Activated CD4-positive, alpha-beta T cell treated with anti-CD3 and anti-CD28 coated beads for 36 hours (primary cell): ENCODE measurements at regions of chr1 and their contacts with region 1.

Region 1: GRCh38 chr1:54944610-54945544 is 35.6 kb upstream of the TMEM61 start:
- DNase-seq: peak; percentile 81
- ATAC-seq: peak; percentile 90
- H3K4me3 Mint-ChIP-seq: no peak overlapping the region
- H3K27ac Mint-ChIP-seq: no peak overlapping the region
- H3K4me1 Mint-ChIP-seq: peaks cover 9% of the 10 kb centered on the region
- H3K27me3 Mint-ChIP-seq: peaks cover 5% of the 10 kb centered on the region

Region 2: DNA sequence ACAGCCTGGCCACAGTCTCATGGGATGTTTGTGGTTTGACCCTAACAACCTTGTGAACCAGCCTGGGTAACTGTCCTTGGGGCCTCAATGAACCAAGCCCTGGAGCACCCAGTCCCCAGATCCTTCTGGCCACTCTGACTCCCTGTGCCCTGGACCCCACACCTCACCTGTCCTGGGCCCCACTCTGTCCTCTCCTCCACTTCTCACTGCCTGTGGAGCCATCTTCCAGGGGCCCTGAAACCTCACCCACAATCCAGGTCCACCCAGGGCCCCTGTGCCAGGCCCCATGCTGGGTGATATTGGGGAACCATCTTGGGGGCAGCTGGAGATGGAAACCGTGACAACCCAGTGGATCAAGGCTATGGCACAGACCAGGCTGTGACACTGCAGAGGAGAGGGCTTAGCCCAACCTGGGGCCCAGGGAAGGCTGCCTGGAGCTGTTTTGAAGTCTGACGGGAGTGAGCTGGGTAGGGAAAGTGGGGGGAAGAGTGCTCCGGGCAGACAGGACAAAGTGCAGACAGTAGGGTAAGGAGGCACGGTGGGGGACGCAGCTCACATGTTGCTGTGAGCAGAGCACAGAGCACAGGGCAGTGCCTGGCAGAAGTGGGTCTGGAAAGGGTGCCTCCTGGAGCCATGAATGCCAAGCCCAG is 1605.0 kb before region 1 on chr1:
- CTCF ChIA-PET with region 1: no interaction called
- POLR2A ChIA-PET with region 1: no interaction called
- intact Hi-C with region 1: no loop called
- DNase-seq: no peak
- ATAC-seq: no peak
- H3K4me3 Mint-ChIP-seq: no peak overlapping the region
- H3K27ac Mint-ChIP-seq: peak overlapping the region; percentile 49
- H3K4me1 Mint-ChIP-seq: peaks cover 19% of the 10 kb centered on the region
- H3K27me3 Mint-ChIP-seq: no peaks in the 10 kb centered on the region

Region 3: GRCh38 chr1:54928327-54928726 is 16.6 kb before region 1 on chr1:
- CTCF ChIA-PET with region 1: interaction called, 21 read pairs
- POLR2A ChIA-PET with region 1: no interaction called
- intact Hi-C with region 1: no loop called
- DNase-seq: no peak
- ATAC-seq: no peak
- H3K4me3 Mint-ChIP-seq: no peak overlapping the region
- H3K27ac Mint-ChIP-seq: no peak overlapping the region
- H3K4me1 Mint-ChIP-seq: no peaks in the 10 kb centered on the region
- H3K27me3 Mint-ChIP-seq: peaks cover 7% of the 10 kb centered on the region

Region 4: DNA sequence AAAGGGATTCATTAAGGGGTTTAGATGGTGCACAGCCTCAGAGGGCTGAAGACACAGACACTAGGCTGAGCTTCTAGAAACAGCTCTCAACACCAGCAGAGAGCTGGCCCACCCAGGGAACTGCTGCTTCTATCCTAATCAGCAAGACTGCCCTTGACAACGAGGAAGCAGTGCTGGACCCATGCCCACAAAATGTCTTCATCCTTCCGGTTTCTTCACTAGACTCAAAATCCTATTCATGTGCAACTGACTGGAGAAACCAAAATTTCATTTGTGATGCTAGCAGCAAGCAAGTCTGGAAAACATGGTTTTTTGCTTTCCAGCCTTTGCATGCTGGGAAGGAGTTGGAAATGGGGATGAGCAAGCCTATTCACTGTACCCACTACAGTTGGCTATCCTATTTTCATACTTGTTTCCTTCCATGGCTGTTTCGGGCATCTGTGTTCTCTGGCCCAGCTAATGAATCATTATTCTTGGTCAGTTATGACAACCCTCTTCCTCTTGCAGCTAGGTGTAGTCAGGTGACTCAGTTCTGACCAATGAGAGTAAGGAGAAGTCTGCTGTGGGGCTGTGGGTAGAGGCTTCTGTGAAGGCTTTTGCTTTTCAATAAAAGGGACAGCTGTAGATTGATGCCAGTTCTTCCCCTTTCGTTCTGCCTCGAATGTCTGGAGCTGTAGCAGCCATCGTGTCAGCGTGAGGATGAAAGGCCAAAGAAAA is 20.9 kb after region 1 on chr1:
- CTCF ChIA-PET with region 1: interaction called, 40 read pairs
- POLR2A ChIA-PET with region 1: no interaction called
- intact Hi-C with region 1: no loop called
- DNase-seq: no peak
- ATAC-seq: peak; percentile 65
- H3K4me3 Mint-ChIP-seq: no peak overlapping the region
- H3K27ac Mint-ChIP-seq: no peak overlapping the region
- H3K4me1 Mint-ChIP-seq: peaks cover 4% of the 10 kb centered on the region
- H3K27me3 Mint-ChIP-seq: peaks cover 15% of the 10 kb centered on the region

Region 5: DNA sequence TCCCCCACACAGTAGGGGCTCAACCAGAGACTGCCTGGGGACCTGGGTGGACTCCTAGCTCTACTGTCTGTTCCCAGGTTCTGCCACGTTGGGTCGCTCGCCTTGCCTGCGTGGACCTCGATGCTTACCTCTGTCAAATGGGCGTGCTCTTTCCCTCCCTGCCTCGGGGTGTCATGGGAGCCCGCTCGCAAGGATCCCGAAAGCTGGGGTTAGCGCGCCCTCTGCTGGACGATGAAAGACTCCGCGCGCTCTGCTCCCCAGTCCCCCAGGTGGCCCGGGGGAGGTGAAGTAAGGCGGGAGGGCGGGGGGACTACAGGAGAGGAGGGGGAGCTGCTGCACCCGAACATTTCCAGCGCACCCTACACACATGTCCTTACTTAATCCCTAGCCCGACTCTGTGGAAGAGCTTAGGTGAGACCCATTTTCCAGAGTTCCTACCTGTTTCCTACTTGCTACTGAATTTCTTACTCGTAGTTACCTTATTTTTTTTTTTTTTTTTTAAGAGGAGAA is 51.5 kb after region 1 on chr1:
- CTCF ChIA-PET with region 1: interaction called, 151 read pairs
- POLR2A ChIA-PET with region 1: no interaction called
- intact Hi-C with region 1: loop called (anchors 1 kb)
- DNase-seq: peak; percentile 92
- ATAC-seq: peak; percentile 96
- H3K4me3 Mint-ChIP-seq: peak overlapping the region; percentile 24
- H3K27ac Mint-ChIP-seq: no peak overlapping the region
- H3K4me1 Mint-ChIP-seq: peaks cover 14% of the 10 kb centered on the region
- H3K27me3 Mint-ChIP-seq: peaks cover 37% of the 10 kb centered on the region